PC-9 (cell line): ENCODE measurements at regions of chr10 and their contacts with region 1.

Region 1: GRCh38 chr10:53886325-53887300 is 914.4 kb downstream of the PCDH15 start:
- DNase-seq: no peak
- H3K4me3 ChIP-seq: no peak overlapping the region
- H3K27ac ChIP-seq: no peak overlapping the region
- H3K4me1 ChIP-seq: no peaks in the 10 kb centered on the region
- H3K27me3 ChIP-seq: no peaks in the 10 kb centered on the region
- CTCF ChIP-seq: no peak

Region 2: GRCh38 chr10:53754596-53755250 is 131.9 kb before region 1 on chr10:
- CTCF ChIA-PET with region 1: no interaction called
- POLR2A ChIA-PET with region 1: interaction called, 17 read pairs
- intact Hi-C with region 1: no loop called
- DNase-seq: no peak
- H3K4me3 ChIP-seq: no peak overlapping the region
- H3K27ac ChIP-seq: no peak overlapping the region
- H3K4me1 ChIP-seq: no peaks in the 10 kb centered on the region
- H3K27me3 ChIP-seq: no peaks in the 10 kb centered on the region
- CTCF ChIP-seq: no peak

Region 3: DNA sequence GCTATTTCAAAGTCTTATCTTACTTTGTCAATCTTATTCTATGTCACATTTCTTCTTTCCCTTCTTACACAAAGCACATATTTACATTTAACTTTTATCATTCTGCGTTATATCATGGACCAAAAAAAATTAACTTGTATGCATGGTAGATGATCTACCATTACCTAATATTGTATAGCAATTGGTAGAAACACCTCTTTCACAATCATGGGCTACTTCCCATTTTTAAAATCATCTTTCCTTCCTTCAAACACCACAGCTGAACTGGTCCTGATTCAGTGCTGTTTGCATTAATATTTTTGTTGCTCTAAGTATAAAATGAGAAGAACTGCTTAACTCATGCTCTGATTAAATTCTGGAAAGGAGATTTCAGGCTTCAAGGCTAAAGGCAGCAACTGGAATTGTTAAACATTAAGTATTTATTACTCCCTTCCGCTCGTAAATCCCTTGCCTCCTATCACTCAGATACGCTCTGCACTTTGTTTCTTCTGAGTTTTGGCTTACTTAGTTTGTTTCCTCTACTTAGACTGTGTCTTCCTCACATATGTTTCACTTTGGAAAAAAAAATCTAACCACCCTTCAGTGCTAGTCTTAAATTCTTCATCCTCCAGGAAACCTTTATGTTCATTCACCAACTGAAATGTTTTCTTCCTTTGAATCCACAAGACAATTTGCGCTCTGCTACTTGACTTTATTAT is 13.0 kb after region 1 on chr10:
- CTCF ChIA-PET with region 1: no interaction called
- POLR2A ChIA-PET with region 1: no interaction called
- intact Hi-C with region 1: no loop called
- DNase-seq: no peak
- H3K4me3 ChIP-seq: no peak overlapping the region
- H3K27ac ChIP-seq: no peak overlapping the region
- H3K4me1 ChIP-seq: no peaks in the 10 kb centered on the region
- H3K27me3 ChIP-seq: no peaks in the 10 kb centered on the region
- CTCF ChIP-seq: no peak